A673 (cell line): ENCODE measurements at regions of chr1 and their contacts with region 1.

Region 1: DNA sequence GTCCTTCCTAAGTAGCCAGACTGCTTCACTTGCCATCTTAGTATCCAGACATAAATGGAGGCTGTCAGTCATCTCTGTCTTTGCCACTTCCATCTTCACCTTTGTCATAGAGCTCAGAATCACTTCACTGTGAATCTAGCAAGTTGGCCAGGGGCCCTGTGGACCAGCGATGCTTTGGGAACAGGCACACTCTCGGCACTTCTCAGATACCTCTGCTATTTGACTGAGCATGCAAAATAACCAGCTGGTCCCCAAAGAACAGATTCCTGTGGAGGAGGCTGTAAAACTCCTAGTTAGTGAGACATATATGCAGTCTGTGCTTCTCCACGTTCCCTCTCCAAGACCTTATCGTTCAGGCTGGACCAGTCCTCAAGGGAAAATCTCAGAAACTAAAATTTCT is 76.8 kb upstream of the COA6 start:
- DNase-seq: no peak
- H3K4me3 ChIP-seq: no peak overlapping the region
- H3K27ac ChIP-seq: no peak overlapping the region
- H3K4me1 ChIP-seq: peaks cover 12% of the 10 kb centered on the region
- H3K27me3 ChIP-seq: no peaks in the 10 kb centered on the region
- CTCF ChIP-seq: no peak

Region 2: DNA sequence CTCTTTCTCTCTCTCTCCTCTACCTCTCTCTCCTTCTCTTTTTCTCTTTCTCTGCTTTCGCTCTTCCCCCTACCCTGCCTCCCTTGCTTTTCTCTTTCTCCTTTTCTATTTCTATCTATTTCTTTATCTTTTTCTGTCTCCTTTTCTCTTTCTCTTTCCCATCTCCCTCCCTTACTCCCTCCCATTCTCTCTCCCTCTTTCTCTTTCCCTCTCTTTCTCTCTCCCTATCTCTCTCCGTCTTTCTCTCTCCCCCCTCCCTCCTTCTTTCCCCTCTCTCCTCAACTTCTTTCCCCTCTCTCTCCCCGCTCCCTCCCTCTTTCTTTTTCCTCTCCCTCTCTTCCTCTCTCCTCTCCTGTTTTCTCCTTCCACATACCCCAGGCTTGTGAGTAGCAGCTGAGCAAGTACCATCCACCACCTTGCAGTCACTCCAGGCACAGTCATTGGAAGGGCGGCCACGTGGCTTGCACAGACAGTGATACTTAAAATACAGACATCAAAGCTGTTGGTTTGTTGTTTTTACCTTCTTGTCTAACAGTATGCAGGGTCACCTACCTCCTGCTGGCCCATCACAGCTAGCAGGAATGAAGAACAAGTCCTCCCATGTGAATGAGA is 132.3 kb before region 1 on chr1:
- CTCF ChIA-PET with region 1: no interaction called
- POLR2A ChIA-PET with region 1: interaction called, 23 read pairs
- intact Hi-C with region 1: no loop called
- DNase-seq: no peak
- H3K4me3 ChIP-seq: no peak overlapping the region
- H3K27ac ChIP-seq: no peak overlapping the region
- H3K4me1 ChIP-seq: no peaks in the 10 kb centered on the region
- H3K27me3 ChIP-seq: no peaks in the 10 kb centered on the region
- CTCF ChIP-seq: no peak

Region 3: GRCh38 chr1:234235434-234235881 is 61.0 kb before region 1 on chr1:
- CTCF ChIA-PET with region 1: no interaction called
- POLR2A ChIA-PET with region 1: no interaction called
- intact Hi-C with region 1: no loop called
- DNase-seq: no peak
- H3K4me3 ChIP-seq: no peak overlapping the region
- H3K27ac ChIP-seq: no peak overlapping the region
- H3K4me1 ChIP-seq: no peaks in the 10 kb centered on the region
- H3K27me3 ChIP-seq: no peaks in the 10 kb centered on the region
- CTCF ChIP-seq: no peak